ENCODE measurements at regions of chr5 and their contacts with region 1.

Region 1: GRCh38 chr5:30401479-30402058 is 791.9 kb upstream of the CDH6 start:
- DNase-seq: peak; percentile 53
- ATAC-seq: peak; percentile 77
- H3K4me3 ChIP-seq: no peak overlapping the region
- H3K27ac ChIP-seq: no peak overlapping the region
- H3K4me1 ChIP-seq: no peaks in the 10 kb centered on the region
- H3K27me3 ChIP-seq: no peaks in the 10 kb centered on the region
- CTCF ChIP-seq: peak; percentile 77
- EP300 ChIP-seq: no peak
- POLR2A ChIP-seq: no peak
- RAD21 ChIP-seq: peak; percentile 63

Region 2: DNA sequence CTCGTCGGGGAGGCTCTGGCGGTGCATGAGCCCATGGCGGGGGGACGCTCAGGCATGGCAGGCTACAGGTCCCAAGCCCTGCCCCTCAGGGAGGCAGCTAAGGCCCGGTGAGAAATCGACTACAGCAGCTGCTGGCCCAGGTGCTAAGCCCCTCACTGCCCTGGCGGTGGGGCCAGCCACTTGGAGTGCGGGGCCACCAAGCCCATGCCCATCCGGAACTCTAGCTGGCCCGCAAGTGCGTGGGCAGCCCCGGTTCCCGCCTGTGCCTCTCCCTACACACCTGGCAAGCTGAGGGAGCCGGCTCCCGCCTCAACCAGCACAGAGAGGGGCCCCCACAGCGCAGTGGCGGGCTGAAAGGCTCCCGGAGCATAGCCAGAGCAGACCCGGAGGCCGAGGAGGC is 1105.0 kb before region 1 on chr5:
- CTCF ChIA-PET with region 1: no interaction called
- POLR2A ChIA-PET with region 1: no interaction called
- in situ Hi-C with region 1: no loop called
- intact Hi-C with region 1: no loop called
- DNase-seq: no peak
- ATAC-seq: no peak
- H3K4me3 ChIP-seq: no peak overlapping the region
- H3K27ac ChIP-seq: no peak overlapping the region
- H3K4me1 ChIP-seq: no peaks in the 10 kb centered on the region
- H3K27me3 ChIP-seq: no peaks in the 10 kb centered on the region
- CTCF ChIP-seq: no peak
- EP300 ChIP-seq: no peak
- POLR2A ChIP-seq: no peak
- RAD21 ChIP-seq: no peak

Region 3: DNA sequence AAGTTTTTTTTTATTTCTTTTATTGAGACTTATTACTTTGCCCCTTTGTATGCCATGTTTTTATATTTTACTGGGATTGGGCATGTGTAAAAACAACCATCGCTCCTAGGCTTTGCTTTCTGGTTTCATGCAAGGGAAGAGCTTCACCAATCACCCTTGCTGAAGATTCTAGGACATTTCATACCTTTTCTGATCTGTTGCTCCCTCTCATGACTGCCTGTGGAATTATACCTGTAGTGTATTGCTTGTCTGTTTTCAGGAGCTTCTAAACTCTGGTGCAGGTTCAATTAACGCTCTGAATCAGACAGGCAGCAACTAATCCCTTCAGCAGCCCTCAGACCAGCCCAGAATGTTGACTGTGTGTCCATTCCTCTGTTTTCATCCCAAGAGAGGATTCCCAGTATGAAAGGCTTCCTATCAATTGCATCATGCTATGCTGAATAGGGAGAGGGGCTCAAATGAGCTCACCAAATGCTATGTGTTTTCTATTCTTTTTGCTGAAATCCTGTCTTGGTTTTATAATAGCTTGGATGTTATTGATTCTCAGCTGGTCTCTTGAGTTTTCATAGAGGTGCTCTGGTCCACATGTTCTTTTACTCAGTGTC is 219.0 kb after region 1 on chr5:
- CTCF ChIA-PET with region 1: interaction called, 5 read pairs
- POLR2A ChIA-PET with region 1: no interaction called
- in situ Hi-C with region 1: no loop called
- intact Hi-C with region 1: loop called (anchors 1 kb)
- DNase-seq: peak; percentile 50
- ATAC-seq: peak; percentile 89
- H3K4me3 ChIP-seq: no peak overlapping the region
- H3K27ac ChIP-seq: no peak overlapping the region
- H3K4me1 ChIP-seq: peaks cover 8% of the 10 kb centered on the region; the same call in 1 of the 2 replicates
- H3K27me3 ChIP-seq: no peaks in the 10 kb centered on the region
- CTCF ChIP-seq: peak; percentile 64
- EP300 ChIP-seq: no peak
- POLR2A ChIP-seq: no peak
- RAD21 ChIP-seq: peak; percentile 64

Region 4: DNA sequence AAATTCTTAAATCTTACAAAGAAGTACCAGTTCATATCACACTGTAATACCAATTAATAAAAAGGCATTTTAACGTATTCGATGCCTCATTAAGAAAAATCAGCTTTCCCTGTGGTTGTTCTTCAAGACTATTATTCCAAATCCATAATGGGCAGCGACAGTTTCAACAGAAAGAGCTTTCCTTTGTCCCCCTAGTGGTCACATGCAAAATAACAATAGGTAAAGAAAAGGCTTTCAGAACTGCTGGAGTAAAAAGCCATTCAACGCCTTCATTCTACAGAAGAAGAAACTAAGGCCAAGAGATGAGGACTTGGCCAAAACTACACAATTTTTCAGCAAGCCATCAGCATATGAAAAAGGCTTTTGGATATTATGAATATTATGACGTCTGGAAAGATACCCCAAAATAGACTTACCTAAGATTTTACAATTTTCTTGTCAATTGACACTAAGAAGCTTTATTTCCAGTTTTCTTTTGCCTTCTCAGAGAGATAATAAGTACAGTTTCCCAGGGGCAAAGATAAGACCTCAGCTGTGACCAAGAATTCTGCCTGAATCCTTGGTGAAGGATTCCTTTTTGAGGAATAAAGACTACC is 785.2 kb after region 1 on chr5:
- CTCF ChIA-PET with region 1: no interaction called
- POLR2A ChIA-PET with region 1: no interaction called
- in situ Hi-C with region 1: no loop called
- intact Hi-C with region 1: loop called (anchors 1 kb)
- DNase-seq: peak; percentile 37
- ATAC-seq: peak; percentile 50
- H3K4me3 ChIP-seq: no peak overlapping the region
- H3K27ac ChIP-seq: no peak overlapping the region
- H3K4me1 ChIP-seq: no peaks in the 10 kb centered on the region
- H3K27me3 ChIP-seq: no peaks in the 10 kb centered on the region
- CTCF ChIP-seq: peak; percentile 60
- EP300 ChIP-seq: no peak
- POLR2A ChIP-seq: no peak
- RAD21 ChIP-seq: no peak

Region 5: DNA sequence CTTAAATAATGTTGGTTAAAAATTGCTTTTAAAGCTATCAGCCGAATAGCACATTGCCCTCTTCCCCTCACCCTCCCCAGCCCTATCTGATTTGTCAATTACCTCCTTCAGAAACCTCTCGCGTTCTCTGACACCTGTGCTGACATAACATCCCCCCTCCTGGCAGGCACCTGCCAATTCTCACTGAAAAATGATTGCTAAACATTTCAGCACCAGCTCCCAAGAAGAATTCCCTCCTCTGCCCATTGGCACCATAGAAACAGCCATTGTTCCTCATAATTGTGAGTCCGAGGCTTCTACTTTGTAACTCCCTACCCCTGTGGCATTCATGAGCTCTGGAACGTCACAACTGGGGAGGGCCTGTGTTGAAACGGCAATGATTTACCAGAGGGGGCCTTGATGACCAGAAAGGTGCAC is 812.1 kb after region 1 on chr5:
- CTCF ChIA-PET with region 1: no interaction called
- POLR2A ChIA-PET with region 1: no interaction called
- in situ Hi-C with region 1: loop called (anchors 25 kb)
- intact Hi-C with region 1: no loop called
- DNase-seq: no peak
- ATAC-seq: no peak
- H3K4me3 ChIP-seq: no peak overlapping the region
- H3K27ac ChIP-seq: no peak overlapping the region
- H3K4me1 ChIP-seq: peaks cover 5% of the 10 kb centered on the region
- H3K27me3 ChIP-seq: no peaks in the 10 kb centered on the region
- CTCF ChIP-seq: no peak
- EP300 ChIP-seq: no peak
- POLR2A ChIP-seq: no peak
- RAD21 ChIP-seq: no peak

Region 6: GRCh38 chr5:31232273-31232888 is 830.8 kb after region 1 on chr5:
- CTCF ChIA-PET with region 1: interaction called, 6 read pairs
- POLR2A ChIA-PET with region 1: no interaction called
- in situ Hi-C with region 1: no loop called
- intact Hi-C with region 1: loop called (anchors 1 kb)
- DNase-seq: peak; percentile 48
- ATAC-seq: peak; percentile 94
- H3K4me3 ChIP-seq: no peak overlapping the region
- H3K27ac ChIP-seq: no peak overlapping the region
- H3K4me1 ChIP-seq: no peaks in the 10 kb centered on the region
- H3K27me3 ChIP-seq: no peaks in the 10 kb centered on the region
- CTCF ChIP-seq: peak; percentile 76
- EP300 ChIP-seq: no peak
- POLR2A ChIP-seq: no peak
- RAD21 ChIP-seq: peak; percentile 57; the same call in 1 of the 2 replicates